Natural killer cell (primary cell): ENCODE measurements at regions of chr2 and their contacts with region 1.

Region 1: GRCh38 chr2:172102391-172103278 is at the start of gene DLX2:
- DNase-seq: peak; percentile 72 to 81
- ATAC-seq: peak; percentile 44 to 74 (median 66)
- H3K4me3 ChIP-seq: peak within 1 kb of the TSS; percentile 44
- H3K4me3 Mint-ChIP-seq: peak within 1 kb of the TSS; percentile 94
- H3K27ac ChIP-seq: no peak within 1 kb of the TSS
- H3K27ac Mint-ChIP-seq: peak within 1 kb of the TSS; percentile 78 to 92
- H3K4me1 ChIP-seq: peaks cover 73% of the 10 kb centered on the region
- H3K4me1 Mint-ChIP-seq: peaks cover 41 to 67% of the 10 kb centered on the region in 2 donors
- H3K27me3 ChIP-seq: peaks cover 89% of the 10 kb centered on the region
- H3K27me3 Mint-ChIP-seq: peaks cover 52 to 59% of the 10 kb centered on the region in 2 donors
- CTCF ChIP-seq: no peak
- total RNA-seq, gene DLX2: 0.55 to 0.84 (median 0.78) TPM

Region 2: DNA sequence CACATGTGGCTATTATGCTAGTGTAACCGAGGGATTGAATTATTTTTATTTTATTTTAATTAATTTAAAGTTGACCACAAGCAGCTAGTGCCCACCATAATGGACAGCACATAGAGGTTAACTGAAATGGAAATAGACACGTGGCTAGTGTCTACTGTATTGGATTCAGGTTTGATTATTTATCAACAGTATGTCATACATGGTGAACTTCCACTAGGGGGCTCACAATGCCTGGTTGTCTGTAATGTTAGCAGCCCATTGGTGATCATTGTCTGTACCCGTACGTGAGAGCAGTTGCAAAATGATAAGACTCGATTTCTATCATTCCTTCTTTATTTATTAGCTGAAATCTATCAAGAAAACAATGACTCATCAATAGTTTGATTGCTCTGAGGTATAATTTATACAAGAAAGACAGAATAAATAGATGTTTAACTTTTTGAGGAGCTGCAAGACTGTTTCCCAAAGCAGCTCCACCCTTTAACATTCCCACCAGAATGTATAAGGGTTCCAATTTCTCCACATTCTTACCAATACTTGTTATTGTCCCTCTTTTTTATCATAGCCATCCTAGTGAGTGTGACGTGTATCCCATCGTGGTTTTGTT is 503.8 kb before region 1 on chr2:
- intact Hi-C with region 1: loop called (anchors 1 kb)
- DNase-seq: peak in 1 of 2 donors; percentile 78
- ATAC-seq: peak; percentile 84 to 100 (median 97)
- H3K4me3 ChIP-seq: no peak overlapping the region
- H3K4me3 Mint-ChIP-seq: no peak overlapping the region
- H3K27ac ChIP-seq: no peak overlapping the region
- H3K27ac Mint-ChIP-seq: no peak overlapping the region
- H3K4me1 ChIP-seq: no peaks in the 10 kb centered on the region
- H3K4me1 Mint-ChIP-seq: peaks cover 0 to 5% of the 10 kb centered on the region in 2 donors
- H3K27me3 ChIP-seq: no peaks in the 10 kb centered on the region
- H3K27me3 Mint-ChIP-seq: peaks cover 16 to 32% of the 10 kb centered on the region in 2 donors
- CTCF ChIP-seq: peak; percentile 79

Region 3: GRCh38 chr2:171893824-171894611 is 208.6 kb before region 1 on chr2 and contains the start of gene SLC25A12:
- intact Hi-C with region 1: loop called (anchors 2 kb)
- DNase-seq: peak; percentile 66 to 85
- ATAC-seq: peak; percentile 97
- H3K4me3 ChIP-seq: peak within 1 kb of the TSS; percentile 95
- H3K4me3 Mint-ChIP-seq: peak within 1 kb of the TSS; percentile 98
- H3K27ac ChIP-seq: peak within 1 kb of the TSS; percentile 76
- H3K27ac Mint-ChIP-seq: peak within 1 kb of the TSS; percentile 41 to 92
- H3K4me1 ChIP-seq: peaks cover 11% of the 10 kb centered on the region
- H3K4me1 Mint-ChIP-seq: peaks cover 32 to 34% of the 10 kb centered on the region in 2 donors
- H3K27me3 ChIP-seq: no peaks in the 10 kb centered on the region
- H3K27me3 Mint-ChIP-seq: peaks cover 0 to 3% of the 10 kb centered on the region in 2 donors
- CTCF ChIP-seq: no peak
- total RNA-seq, gene SLC25A12: 18.7 to 21.7 (median 19.0) TPM

Region 4: GRCh38 chr2:171957061-171957460 is 145.6 kb before region 1 on chr2:
- intact Hi-C with region 1: loop called (anchors 2 kb)
- DNase-seq: peak in 1 of 2 donors; percentile 28
- ATAC-seq: peak in 1 of 3 donors; percentile 42
- H3K4me3 ChIP-seq: no peak overlapping the region
- H3K4me3 Mint-ChIP-seq: no peak overlapping the region
- H3K27ac ChIP-seq: no peak overlapping the region
- H3K27ac Mint-ChIP-seq: no peak overlapping the region
- H3K4me1 ChIP-seq: no peaks in the 10 kb centered on the region
- H3K4me1 Mint-ChIP-seq: peaks cover 21 to 31% of the 10 kb centered on the region in 2 donors
- H3K27me3 ChIP-seq: no peaks in the 10 kb centered on the region
- H3K27me3 Mint-ChIP-seq: no peaks in the 10 kb centered on the region
- CTCF ChIP-seq: no peak

Region 5: DNA sequence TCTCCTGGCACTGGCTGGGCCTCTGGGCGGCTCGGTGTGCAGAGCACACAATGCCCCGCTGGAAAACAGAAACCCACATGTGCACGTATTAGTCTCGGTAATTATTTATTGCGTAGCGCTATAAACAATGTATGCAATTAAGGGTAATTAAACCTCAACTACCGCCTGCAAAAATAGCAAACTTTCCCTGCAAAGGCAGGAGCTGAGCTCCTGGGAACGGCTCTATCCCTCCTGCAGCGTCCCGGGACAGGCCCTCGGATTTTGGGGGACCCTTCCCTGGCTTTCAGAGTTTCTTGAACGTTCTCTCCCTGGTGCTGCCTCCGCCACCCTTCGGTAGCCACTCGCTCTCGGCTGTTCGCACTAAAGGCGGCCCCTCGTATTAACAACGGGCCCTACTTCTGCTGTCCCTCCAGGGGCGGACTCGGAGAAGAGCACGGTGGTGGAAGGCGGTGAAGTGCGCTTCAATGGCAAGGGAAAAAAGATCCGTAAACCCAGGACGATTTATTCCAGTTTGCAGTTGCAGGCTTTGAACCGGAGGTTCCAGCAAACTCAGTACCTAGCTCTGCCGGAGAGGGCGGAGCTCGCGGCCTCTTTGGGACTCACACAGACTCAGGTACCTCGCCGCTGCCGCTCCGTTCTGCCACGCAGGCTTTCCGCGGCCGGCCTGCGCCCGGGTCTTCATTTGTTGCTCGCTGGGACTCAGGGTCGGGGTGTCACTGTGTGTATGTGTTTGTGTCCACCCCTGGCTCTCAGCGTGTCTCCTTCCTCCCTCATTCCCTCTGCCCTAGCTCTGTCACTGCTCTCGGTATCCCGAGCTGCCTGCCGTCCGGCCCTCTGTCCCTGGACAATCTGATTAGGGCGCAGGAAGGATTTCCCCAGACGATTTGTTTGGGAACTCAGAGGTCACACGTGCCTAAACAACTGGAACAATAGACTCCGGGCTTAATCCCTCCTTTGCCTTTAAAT is 16.1 kb before region 1 on chr2:
- intact Hi-C with region 1: loop called (anchors 2 kb)
- DNase-seq: peak in 1 of 2 donors; percentile 83
- ATAC-seq: peak in 2 of 3 donors; percentile 41 to 52
- H3K4me3 ChIP-seq: no peak overlapping the region
- H3K4me3 Mint-ChIP-seq: peak overlapping the region; percentile 88
- H3K27ac ChIP-seq: no peak overlapping the region
- H3K27ac Mint-ChIP-seq: peak overlapping the region; percentile 71 to 83
- H3K4me1 ChIP-seq: peaks cover 63% of the 10 kb centered on the region
- H3K4me1 Mint-ChIP-seq: peaks cover 53 to 65% of the 10 kb centered on the region in 2 donors
- H3K27me3 ChIP-seq: peaks cover 95% of the 10 kb centered on the region
- H3K27me3 Mint-ChIP-seq: peaks cover 78 to 95% of the 10 kb centered on the region in 2 donors
- CTCF ChIP-seq: no peak